ENCODE measurements at regions of chr18 and their contacts with region 1.

Region 1: DNA sequence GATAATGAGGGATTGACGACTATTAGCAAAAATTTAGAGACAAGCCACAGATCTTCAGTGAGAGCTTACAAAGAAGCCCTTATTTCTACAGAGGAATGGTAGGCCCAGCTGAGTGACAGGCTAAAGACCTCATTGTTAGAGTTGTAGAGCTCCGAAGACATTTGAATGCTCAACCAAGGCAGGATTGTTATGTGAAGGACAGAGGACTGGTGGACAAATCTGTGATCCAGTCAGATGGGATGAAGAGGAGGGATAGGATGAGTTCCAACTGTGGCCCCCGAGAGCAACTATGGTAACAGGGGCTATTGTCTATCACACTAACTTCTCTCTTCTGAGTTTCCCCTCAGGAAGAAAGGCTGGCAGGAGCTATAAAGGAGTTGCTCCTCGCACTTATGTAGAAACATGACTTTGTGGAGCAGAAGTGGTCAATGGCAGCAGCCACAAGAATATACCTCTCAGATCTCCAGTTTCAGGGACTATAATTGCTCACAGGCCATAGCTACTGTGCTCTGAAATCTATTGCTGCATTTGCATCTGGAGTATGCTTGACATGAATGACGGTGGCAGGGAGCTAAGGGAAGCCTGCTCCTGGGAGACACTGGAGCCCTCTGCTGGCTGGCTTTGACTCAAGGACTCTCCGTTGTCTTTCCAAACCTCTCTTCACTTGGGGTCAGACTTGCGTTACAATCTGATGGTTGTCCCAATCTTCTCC is 50.3 kb upstream of the GREB1L start:
- DNase-seq: no peak
- H3K4me3 ChIP-seq: no peak overlapping the region
- H3K27ac ChIP-seq: no peak overlapping the region
- H3K4me1 ChIP-seq: no peaks in the 10 kb centered on the region
- H3K27me3 ChIP-seq: no peaks in the 10 kb centered on the region
- CTCF ChIP-seq: peak in 2 of 3 experiments; percentile 22 to 44

Region 2: DNA sequence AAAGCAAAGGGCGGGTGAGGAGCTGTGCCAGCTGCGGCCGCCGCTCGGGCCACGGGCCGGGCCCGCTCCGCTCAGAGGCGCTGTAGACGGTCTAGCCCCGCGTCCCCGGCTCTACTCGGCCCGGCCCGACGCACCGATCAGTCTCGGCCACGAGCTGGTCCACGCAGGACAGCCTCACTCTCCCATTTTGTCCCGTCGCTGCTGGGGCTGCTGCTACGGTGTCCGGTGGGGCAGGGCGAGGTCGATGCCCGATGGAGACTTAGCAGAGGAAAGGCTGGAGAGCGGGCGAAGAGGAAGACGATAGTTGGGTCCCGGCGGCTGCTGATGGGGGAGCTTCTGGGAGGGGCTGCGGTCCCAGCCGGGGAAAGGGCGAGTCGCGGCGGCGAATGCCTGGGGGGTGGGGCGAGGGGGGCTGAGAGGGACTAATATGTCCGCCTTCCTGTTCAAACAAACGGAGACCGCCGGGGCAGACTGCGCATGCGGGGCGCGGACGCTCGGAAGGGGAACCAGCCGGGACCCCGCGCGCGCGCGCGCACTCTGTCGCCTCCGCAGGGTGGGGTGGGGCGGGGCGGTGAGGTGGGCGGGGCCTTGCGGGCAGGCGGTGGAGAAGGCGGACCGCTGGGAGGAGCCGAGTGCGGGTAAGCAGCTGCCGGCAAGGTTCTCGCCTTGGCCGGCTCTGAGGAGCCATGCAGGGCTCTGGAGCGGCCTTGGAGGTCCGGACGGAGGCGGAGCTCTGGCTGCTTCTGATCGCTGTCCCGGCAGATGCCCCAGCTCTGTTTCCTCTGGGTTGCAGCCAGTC is 80.2 kb before region 1 on chr18 and contains the start of gene ROCK1:
- intact Hi-C with region 1: no loop called
- DNase-seq: peak; percentile 96 to 99
- H3K4me3 ChIP-seq: peak within 1 kb of the TSS; percentile 95 to 99
- H3K27ac ChIP-seq: peak within 1 kb of the TSS; percentile 98 to 99
- H3K4me1 ChIP-seq: peaks cover 16% of the 10 kb centered on the region in 2 donors
- H3K27me3 ChIP-seq: no peaks in the 10 kb centered on the region
- CTCF ChIP-seq: no peak
- total RNA-seq, gene ROCK1: 32.0 TPM

Region 3: GRCh38 chr18:21242141-21242779 is 50.5 kb after region 1 on chr18 and contains the start of gene GREB1L:
- intact Hi-C with region 1: loop called (anchors 1 kb)
- DNase-seq: peak in 1 of 2 donors; percentile 71
- H3K4me3 ChIP-seq: peak within 1 kb of the TSS; percentile 73 to 87
- H3K27ac ChIP-seq: peak within 1 kb of the TSS; percentile 68 to 72
- H3K4me1 ChIP-seq: peaks cover 0 to 3% of the 10 kb centered on the region in 2 donors
- H3K27me3 ChIP-seq: no peaks in the 10 kb centered on the region
- CTCF ChIP-seq: peak in 2 of 3 experiments; percentile 20 to 23
- total RNA-seq, gene GREB1L: 2.2 TPM

Region 4: DNA sequence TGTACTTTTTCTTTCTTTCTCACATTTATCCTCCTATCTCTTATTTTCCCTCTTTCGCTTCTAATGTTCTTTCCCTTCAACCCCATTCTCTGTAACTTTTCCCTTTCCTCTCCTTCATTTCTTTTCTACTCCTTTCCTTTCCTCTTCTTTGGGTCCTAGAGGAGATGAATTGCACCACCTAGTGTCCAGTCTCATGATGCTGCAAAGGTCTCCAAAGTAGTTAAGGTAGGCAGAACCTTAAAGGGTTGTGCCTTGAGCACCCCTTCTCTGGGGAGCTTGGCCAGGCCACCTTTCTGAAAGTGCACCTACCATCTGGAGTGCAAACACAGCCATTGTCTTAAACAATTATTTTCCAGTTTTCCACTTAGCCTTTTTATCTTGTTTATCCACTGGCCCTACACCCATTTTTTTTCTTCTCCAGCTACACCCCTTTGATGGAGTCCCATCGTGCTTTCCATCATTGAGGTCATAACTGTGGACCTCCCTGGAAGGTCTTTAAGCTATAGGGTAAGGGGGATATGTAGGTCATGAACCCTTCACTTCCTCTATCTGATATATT is 252.8 kb after region 1 on chr18:
- intact Hi-C with region 1: loop called (anchors 1 kb)
- DNase-seq: no peak
- H3K4me3 ChIP-seq: no peak overlapping the region
- H3K27ac ChIP-seq: no peak overlapping the region
- H3K4me1 ChIP-seq: no peaks in the 10 kb centered on the region
- H3K27me3 ChIP-seq: no peaks in the 10 kb centered on the region
- CTCF ChIP-seq: peak; percentile 37 to 73 (median 56)

Region 5: DNA sequence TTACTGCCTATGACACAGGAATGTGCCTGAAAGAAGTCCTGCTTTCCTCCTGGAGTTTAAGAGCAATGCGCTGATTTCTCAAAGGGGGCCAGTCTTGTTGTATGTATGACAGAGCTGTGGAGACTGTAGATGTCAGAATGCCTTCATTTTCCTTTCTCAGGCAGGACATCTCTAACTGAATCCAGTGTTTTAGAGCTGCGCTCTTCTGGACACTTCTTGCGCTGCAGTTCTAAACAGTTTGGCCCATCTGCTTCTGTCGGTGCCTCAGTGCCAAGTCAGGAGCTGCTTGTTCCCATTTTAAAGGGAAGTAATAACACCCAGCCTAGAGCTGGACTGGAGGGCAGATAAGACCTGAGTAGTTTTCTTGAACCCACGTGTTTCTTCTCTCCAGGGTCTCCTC is 317.3 kb after region 1 on chr18:
- intact Hi-C with region 1: loop called (anchors 10 kb)
- DNase-seq: no peak
- H3K4me3 ChIP-seq: no peak overlapping the region
- H3K27ac ChIP-seq: no peak overlapping the region
- H3K4me1 ChIP-seq: no peaks in the 10 kb centered on the region
- H3K27me3 ChIP-seq: no peaks in the 10 kb centered on the region
- CTCF ChIP-seq: no peak

Region 6: DNA sequence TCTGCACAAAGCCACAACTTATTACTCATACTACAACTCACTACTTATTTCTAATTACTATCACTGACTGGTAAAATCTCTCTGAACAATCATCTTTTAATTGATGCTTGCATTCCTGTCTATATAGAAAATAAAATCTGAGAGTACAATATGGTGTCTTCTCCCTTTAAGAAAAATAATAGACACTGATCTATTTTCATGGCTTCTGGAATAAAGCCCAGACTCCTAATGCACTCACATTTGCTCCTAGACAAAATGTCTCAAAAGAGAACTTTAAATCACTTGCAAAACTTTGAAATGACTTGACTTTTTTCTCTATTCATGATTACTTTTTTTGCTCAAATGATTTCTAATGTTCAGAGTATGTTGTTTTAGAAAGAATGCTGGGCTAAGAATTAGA is 380.0 kb after region 1 on chr18:
- intact Hi-C with region 1: loop called (anchors 10 kb)
- DNase-seq: no peak
- H3K4me3 ChIP-seq: no peak overlapping the region
- H3K27ac ChIP-seq: peak overlapping the region; percentile 54 to 59
- H3K4me1 ChIP-seq: peaks cover 6 to 10% of the 10 kb centered on the region in 2 donors
- H3K27me3 ChIP-seq: no peaks in the 10 kb centered on the region
- CTCF ChIP-seq: no peak

Region 7: DNA sequence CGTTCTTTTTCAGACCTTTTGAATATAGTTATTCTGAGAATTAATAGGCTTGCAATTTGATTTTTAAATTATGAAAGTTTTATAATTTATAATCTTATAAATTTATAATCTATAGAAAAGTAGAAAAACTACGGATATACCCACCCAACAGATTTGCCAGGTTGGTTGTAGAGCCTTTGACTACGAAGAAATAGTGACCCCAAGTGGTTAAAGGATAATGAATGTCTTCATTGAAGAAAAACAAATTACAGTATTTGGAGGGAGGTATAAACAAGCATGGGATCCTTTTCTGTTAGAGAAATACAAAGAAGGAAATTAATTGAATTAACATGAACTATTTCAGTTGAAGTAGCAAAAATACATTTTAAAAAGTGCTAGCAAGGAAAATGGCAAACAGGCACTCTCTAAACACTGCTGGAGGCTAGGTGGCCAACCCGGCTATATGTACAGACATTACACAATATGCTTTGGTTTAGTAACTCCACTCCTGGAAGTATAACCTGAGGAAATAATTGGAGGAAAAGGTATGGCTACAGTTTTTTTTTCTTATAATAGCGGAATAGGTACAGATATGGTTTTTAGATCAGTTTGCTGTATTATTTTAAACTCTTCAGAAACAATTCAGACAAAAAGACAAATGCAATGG is 659.7 kb after region 1 on chr18:
- intact Hi-C with region 1: loop called (anchors 10 kb)
- DNase-seq: no peak
- H3K4me3 ChIP-seq: no peak overlapping the region
- H3K27ac ChIP-seq: no peak overlapping the region
- H3K4me1 ChIP-seq: no peaks in the 10 kb centered on the region
- H3K27me3 ChIP-seq: no peaks in the 10 kb centered on the region
- CTCF ChIP-seq: peak; percentile 18 to 56 (median 43)

Region 8: DNA sequence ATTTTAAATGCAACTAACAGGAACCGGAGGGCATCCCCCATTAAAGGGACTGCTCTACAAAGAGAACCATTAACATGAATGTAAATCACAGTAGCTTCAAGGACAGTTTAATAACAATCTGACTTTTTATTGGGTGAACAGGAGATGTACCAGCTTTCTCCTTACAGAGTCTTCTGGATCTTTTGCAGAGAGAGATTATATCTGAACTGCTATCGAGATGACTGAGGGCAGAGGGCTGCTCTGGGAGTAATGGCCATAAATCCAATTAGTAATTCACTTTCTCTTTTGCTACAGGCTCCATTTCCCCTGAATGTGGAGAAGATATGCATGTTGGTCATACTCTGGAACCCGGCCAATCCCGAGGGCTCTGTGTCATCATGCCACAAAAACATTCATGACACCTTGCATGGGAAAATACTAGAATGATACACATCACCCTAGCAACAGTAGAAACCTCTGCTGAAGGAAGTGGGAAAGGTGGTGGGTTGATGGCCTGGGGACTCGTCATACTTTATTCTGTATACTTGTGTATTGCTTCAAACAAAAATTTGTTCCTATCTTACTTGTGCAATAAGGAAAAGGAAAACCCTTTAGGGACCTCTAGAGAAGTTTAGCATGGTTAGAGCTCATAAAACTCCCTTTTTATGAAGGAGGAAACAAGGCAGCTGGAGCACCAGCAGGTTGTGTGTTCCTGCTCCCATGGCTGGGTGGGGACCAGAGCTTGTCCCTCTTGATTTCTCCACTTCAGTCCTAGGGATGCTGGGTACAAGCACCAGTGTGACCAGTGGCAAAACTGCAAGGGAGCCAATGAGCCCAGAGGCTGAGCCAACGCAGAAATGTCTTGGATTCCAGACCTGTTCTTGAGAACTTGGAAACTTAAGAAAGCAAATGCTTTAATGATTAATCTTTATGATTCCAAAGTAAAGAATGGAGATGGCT is 1199.9 kb after region 1 on chr18:
- intact Hi-C with region 1: no loop called
- DNase-seq: peak in 1 of 2 donors; percentile 74
- H3K4me3 ChIP-seq: no peak overlapping the region
- H3K27ac ChIP-seq: peak overlapping the region in 1 of 2 donors; percentile 30
- H3K4me1 ChIP-seq: peaks cover 0 to 13% of the 10 kb centered on the region in 2 donors
- H3K27me3 ChIP-seq: no peaks in the 10 kb centered on the region
- CTCF ChIP-seq: no peak